ENCODE measurements at regions of chr17 and their contacts with region 1.

Region 1: GRCh38 chr17:67717624-67718329 is at the start of gene NOL11:
- DNase-seq: peak; percentile 98
- CTCF ChIP-seq: peak; percentile 95

Region 2: DNA sequence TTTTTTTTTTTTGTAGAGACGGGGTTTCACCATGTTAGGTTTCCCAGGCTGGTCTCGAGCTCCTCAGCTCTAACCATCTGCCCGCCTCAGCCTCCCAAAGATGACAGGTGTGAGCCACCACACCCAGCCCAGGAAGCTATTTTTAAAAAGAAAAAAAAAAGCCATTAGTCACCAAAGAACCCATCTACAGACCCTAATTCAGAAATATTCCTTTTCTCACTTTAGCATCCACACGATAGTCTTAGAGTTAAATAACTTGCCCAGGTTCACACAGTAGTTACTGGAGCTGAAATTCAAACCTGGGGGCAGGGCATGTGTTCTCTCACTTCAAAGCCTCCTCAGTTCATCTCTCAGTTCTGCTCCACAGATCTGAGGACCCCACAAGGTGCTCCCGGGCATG is 70.3 kb before region 1 on chr17:
- CTCF ChIA-PET with region 1: interaction called, 11 read pairs
- POLR2A ChIA-PET with region 1: no interaction called
- DNase-seq: no peak
- CTCF ChIP-seq: no peak

Region 3: GRCh38 chr17:67656494-67657203 is 61.1 kb before region 1 on chr17:
- CTCF ChIA-PET with region 1: no interaction called
- POLR2A ChIA-PET with region 1: interaction called, 10 read pairs
- DNase-seq: peak; percentile 39
- CTCF ChIP-seq: no peak

Region 4: DNA sequence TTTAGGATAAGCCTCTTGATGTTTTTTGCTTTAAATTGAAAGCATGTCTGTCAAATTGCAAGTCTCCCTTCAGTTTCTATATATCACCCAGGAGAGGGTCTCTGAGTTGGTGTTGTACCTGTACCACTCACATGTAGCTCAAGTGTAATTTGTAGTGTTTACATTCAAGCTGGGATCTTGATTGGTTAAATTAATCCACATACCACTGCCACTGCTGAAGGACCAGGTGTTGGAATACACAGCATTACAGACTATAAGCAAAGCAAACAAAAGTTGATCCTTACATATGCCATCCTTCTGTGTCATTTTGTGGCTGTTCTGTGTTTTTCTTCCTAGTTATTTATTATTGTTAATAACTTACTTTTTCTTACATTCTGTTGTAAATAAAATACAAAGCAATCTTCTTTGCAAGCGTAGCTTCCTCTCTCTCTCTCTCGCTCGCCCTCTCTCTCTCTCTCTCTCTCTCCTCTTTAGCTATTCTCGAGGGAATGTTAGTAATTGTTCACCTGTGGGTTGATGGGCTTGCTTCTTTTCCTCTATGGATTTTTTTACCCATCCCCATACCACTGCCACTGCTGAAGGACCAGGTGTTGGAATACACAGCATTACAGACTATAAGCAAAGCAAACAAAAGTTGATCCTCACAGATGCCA is 20.8 kb before region 1 on chr17:
- CTCF ChIA-PET with region 1: interaction called, 10 read pairs
- POLR2A ChIA-PET with region 1: no interaction called
- DNase-seq: no peak
- CTCF ChIP-seq: no peak

Region 5: GRCh38 chr17:67707442-67707841 is 10.3 kb before region 1 on chr17:
- CTCF ChIA-PET with region 1: interaction called, 13 read pairs
- POLR2A ChIA-PET with region 1: no interaction called
- DNase-seq: no peak
- CTCF ChIP-seq: no peak

Measured in GM10248 (cell line).